A549 (cell line): ENCODE measurements at regions of chr3 and their contacts with region 1.

Region 1: DNA sequence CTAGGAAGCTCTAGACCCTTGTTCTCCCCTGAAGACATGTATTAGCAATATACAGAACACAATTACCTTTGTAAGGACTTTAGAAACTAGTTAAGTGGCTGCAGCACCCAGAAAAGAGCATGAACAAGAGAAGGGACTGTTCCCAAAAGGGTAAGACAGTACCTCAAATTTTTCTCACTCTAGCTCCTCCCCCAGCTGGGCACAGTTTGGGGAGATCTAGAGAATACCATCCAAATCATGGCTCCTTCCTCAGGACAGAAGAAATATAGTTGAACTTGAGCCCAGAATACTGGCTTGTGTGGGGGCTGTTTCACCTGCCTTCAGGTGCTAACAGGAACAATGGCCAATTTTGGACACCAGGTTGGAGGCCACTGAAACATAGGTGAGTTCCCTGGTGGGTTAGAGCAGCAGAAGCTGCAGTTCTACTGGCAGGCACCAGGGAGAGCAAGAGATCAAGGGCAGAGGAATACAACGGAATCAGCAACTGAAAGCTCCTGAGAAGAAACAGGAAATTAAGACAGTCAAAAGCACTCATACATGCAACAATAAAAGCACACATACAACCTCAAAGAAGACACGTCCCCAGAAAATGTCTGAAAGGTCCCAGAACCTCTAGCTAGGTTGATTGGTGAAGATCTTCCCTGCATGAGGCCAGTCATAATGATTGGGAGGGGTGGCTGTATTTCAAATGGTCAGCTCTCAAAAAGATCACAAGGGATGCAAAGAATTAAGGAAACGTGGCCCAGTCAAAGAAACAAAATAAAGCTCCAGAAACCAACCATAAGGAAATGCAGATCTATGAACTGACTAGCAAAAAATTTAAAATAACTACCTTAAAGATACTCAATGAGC is 104.9 kb upstream of the ASB14 start:
- DNase-seq: peak; percentile 38 to 65
- ATAC-seq: peak; percentile 95 to 98
- H3K4me3 ChIP-seq: no peak overlapping the region
- H3K27ac ChIP-seq: peak overlapping the region; percentile 7 to 61; a peak in 2 of 6 replicates
- H3K4me1 ChIP-seq: no peaks in the 10 kb centered on the region
- CTCF ChIP-seq: peak; percentile 71
- EP300 ChIP-seq: no peak
- POLR2A ChIP-seq: no peak
- RAD21 ChIP-seq: peak; percentile 78 to 87

Region 2: GRCh38 chr3:57068437-57069089 is 328.8 kb before region 1 on chr3:
- CTCF ChIA-PET with region 1: no interaction called
- POLR2A ChIA-PET with region 1: no interaction called
- DNase-seq: peak; percentile 55 to 68
- ATAC-seq: peak; percentile 92 to 98
- H3K4me3 ChIP-seq: no peak overlapping the region
- H3K27ac ChIP-seq: peak overlapping the region; percentile 68 to 87
- H3K4me1 ChIP-seq: peaks cover 30% of the 10 kb centered on the region; the same call in 2 of the 3 replicates
- CTCF ChIP-seq: no peak
- EP300 ChIP-seq: no peak
- POLR2A ChIP-seq: no peak
- RAD21 ChIP-seq: no peak

Region 3: DNA sequence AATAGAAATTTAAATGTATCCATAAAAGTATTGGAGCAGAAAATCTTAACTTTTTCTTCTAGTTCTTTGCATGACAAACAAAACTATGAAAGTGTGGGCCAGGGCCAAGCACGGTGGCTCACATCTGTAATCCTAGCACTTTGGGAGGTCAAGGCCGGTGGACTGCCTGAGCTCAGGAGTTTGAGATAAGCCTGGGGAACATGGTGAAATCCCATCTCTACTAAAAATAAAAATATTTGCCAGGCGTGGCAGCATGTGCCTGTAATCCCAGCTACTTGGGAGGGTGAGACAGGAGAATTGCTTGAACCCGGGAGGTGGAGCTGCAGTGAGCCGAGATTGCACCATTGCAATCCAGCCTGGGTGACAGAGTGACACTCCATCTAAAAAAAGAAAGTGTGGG is 11.9 kb before region 1 on chr3:
- CTCF ChIA-PET with region 1: interaction called, 12 read pairs
- POLR2A ChIA-PET with region 1: no interaction called
- DNase-seq: no peak
- ATAC-seq: no peak
- H3K4me3 ChIP-seq: no peak overlapping the region
- H3K27ac ChIP-seq: no peak overlapping the region
- H3K4me1 ChIP-seq: no peaks in the 10 kb centered on the region
- CTCF ChIP-seq: no peak
- EP300 ChIP-seq: no peak
- POLR2A ChIP-seq: no peak
- RAD21 ChIP-seq: no peak

Region 4: GRCh38 chr3:57434041-57434440 is 36.6 kb after region 1 on chr3:
- CTCF ChIA-PET with region 1: interaction called, 12 read pairs
- POLR2A ChIA-PET with region 1: no interaction called
- DNase-seq: peak; percentile 27 to 47
- ATAC-seq: peak; percentile 77 to 79; a peak in 5 of 6 replicates
- H3K4me3 ChIP-seq: no peak overlapping the region
- H3K27ac ChIP-seq: no peak overlapping the region
- H3K4me1 ChIP-seq: 0 out of 3 replicates have a peak, but pooled peaks cover 3% of the 10 kb centered on the region
- CTCF ChIP-seq: peak; percentile 39; the same call in 2 of the 3 replicates
- EP300 ChIP-seq: no peak
- POLR2A ChIP-seq: no peak
- RAD21 ChIP-seq: peak; percentile 27 to 46; a peak in 3 of 5 replicates

Region 5: GRCh38 chr3:57555738-57556458 is 158.5 kb after region 1 on chr3 and contains the start of gene PDE12:
- CTCF ChIA-PET with region 1: interaction called, 11 read pairs
- POLR2A ChIA-PET with region 1: interaction called, 7 read pairs
- DNase-seq: peak; percentile 72 to 93
- ATAC-seq: peak; percentile 95 to 97
- H3K4me3 ChIP-seq: peak within 1 kb of the TSS; percentile 69
- H3K27ac ChIP-seq: peak within 1 kb of the TSS; percentile 82 to 87
- H3K4me1 ChIP-seq: peaks cover 13% of the 10 kb centered on the region; the same call in 2 of the 3 replicates
- CTCF ChIP-seq: no peak
- EP300 ChIP-seq: no peak
- POLR2A ChIP-seq: peak; percentile 51
- RAD21 ChIP-seq: no peak
- polyA plus RNA-seq, gene PDE12: 12.9 and 14.4 TPM in 2 replicates

Region 6: GRCh38 chr3:57582474-57583168 is 185.2 kb after region 1 on chr3:
- CTCF ChIA-PET with region 1: interaction called, 12 read pairs
- POLR2A ChIA-PET with region 1: no interaction called
- DNase-seq: peak in 1 of 2 experiments; percentile 28
- ATAC-seq: peak; percentile 72 to 80; a peak in 4 of 6 replicates
- H3K4me3 ChIP-seq: no peak overlapping the region
- H3K27ac ChIP-seq: no peak overlapping the region
- H3K4me1 ChIP-seq: peaks cover 4% of the 10 kb centered on the region; the same call in 1 of the 3 replicates
- CTCF ChIP-seq: no peak; the same call in 2 of the 3 replicates
- EP300 ChIP-seq: no peak
- POLR2A ChIP-seq: no peak
- RAD21 ChIP-seq: peak; percentile 30 to 32; a peak in 2 of 5 replicates